ENCODE measurements at regions of chr1 and their contacts with region 1.

Region 1: DNA sequence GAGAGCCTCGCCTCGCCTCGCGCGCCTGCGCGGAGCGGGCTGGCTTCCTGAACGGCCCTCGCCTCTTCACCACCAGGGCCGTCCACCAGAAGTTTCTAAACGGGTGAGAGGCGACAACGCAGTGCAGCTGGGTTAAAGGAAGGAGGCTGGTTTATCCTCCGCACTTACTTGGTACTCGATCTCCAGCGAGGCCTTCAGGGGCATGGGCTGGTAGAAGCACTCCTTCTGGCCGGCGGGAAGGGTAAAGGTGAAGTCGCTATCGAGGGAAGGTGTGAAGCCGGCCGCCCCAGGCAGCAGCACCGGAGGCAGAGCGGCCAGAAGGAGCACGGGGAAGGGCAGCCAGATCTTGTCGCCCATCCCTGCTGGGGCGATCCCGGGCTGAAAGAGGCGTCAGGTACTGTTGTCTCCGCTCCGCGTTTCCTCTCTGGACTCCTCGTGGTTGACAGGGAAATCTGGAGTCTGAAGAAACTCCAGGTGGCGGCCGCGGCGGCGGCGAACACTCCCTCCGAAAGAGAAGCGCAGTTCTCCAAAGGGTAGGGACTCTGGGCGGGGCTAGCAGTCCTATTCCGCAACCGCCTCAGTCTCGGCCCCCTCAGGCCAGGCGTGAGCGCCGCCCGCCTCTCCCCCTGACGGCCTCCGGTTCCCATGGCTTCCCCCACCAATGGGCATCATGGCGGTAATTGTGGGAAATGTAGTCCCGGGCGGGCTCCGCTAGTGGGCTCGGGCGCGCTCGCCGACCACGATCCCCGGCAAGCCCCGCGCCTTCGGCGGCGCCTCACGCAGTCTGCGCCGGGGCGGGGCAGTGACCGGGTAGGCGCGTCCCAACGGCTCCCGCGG is at the start of gene TMED5:
- DNase-seq: peak; percentile 98
- ATAC-seq: peak; percentile 85
- H3K4me3 Mint-ChIP-seq: peak within 1 kb of the TSS; percentile 89
- H3K27ac Mint-ChIP-seq: peak within 1 kb of the TSS; percentile 99
- H3K4me1 Mint-ChIP-seq: peaks cover 41% of the 10 kb centered on the region
- H3K27me3 Mint-ChIP-seq: no peaks in the 10 kb centered on the region
- total RNA-seq, gene TMED5: 32.6 to 33.0 TPM

Region 2: GRCh38 chr1:92843429-92844352 is 336.4 kb before region 1 on chr1:
- CTCF ChIA-PET with region 1: no interaction called
- POLR2A ChIA-PET with region 1: interaction called, 10 read pairs
- intact Hi-C with region 1: no loop called
- DNase-seq: no peak
- ATAC-seq: no peak
- H3K4me3 Mint-ChIP-seq: no peak overlapping the region
- H3K27ac Mint-ChIP-seq: peak overlapping the region; percentile 37
- H3K4me1 Mint-ChIP-seq: peaks cover 16% of the 10 kb centered on the region
- H3K27me3 Mint-ChIP-seq: no peaks in the 10 kb centered on the region

Region 3: GRCh38 chr1:93042187-93043056 is 137.7 kb before region 1 on chr1:
- CTCF ChIA-PET with region 1: no interaction called
- POLR2A ChIA-PET with region 1: no interaction called
- intact Hi-C with region 1: loop called in 1 of 2 experiments (anchors 1 kb)
- DNase-seq: peak; percentile 20
- ATAC-seq: peak; percentile 98
- H3K4me3 Mint-ChIP-seq: peak overlapping the region; percentile 56
- H3K27ac Mint-ChIP-seq: peak overlapping the region; percentile 92
- H3K4me1 Mint-ChIP-seq: peaks cover 30% of the 10 kb centered on the region
- H3K27me3 Mint-ChIP-seq: no peaks in the 10 kb centered on the region

Region 4: DNA sequence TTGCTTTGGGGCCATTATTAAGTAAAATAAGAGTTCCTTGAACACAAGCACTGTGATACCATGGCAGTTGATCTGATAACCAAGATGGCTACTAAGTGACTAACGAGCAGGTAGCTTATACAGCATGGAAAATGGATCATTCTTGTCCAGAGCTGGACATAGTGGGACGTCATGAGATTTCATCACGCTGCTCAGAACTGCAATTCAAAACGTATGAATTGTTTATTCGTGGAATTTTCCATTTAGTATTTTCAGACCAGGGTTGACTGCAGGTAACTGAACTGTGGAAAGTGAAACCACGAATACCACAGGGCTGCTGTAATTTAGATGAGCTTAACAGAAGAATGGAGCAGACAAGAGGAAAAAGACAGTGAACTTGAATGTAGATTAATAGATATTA is 39.3 kb after region 1 on chr1:
- CTCF ChIA-PET with region 1: no interaction called
- POLR2A ChIA-PET with region 1: no interaction called
- intact Hi-C with region 1: loop called in 1 of 2 experiments (anchors 2 kb)
- DNase-seq: peak; percentile 50
- ATAC-seq: peak; percentile 64
- H3K4me3 Mint-ChIP-seq: peak overlapping the region; percentile 44
- H3K27ac Mint-ChIP-seq: peak overlapping the region; percentile 86
- H3K4me1 Mint-ChIP-seq: peaks cover 18% of the 10 kb centered on the region
- H3K27me3 Mint-ChIP-seq: no peaks in the 10 kb centered on the region

Region 5: DNA sequence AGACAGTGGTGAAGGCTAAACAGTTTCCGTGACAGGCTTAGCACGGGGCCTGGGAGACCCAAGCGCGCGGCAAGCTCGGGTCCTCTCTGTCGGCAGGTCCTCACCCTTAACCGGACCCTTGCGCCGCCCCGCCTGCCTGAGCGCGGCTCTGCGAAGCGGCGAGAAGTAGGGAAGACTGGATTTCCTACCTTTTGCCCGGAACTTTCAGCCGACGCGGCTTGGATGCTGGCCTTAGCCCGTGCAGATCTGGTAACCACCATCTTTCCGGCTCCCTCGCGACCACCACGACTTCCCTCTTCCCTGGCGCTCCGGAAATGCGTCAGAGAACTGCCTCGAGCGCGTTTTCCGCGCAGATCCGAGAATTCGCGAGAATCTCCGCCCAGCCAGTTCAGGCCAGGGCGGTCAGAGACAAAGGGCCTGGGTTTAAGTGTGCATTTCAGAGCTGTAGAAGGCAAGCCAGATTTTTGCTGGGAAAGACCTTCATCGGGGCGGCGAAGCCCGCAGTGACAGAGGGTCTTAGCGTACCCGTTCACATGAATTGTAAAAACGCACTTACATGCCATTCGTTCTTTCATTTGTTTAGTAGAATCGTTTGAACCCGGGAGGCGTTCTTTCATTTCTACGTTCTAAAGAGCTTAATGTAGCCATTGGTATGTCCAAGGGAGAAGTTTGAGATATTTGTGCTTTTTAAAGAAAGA is 698.9 kb after region 1 on chr1 and contains the start of gene DNTTIP2:
- CTCF ChIA-PET with region 1: no interaction called
- POLR2A ChIA-PET with region 1: no interaction called
- intact Hi-C with region 1: loop called in 1 of 2 experiments (anchors 1 kb)
- DNase-seq: peak; percentile 94
- ATAC-seq: peak; percentile 93
- H3K4me3 Mint-ChIP-seq: peak within 1 kb of the TSS; percentile 92
- H3K27ac Mint-ChIP-seq: peak within 1 kb of the TSS; percentile 97
- H3K4me1 Mint-ChIP-seq: peaks cover 45% of the 10 kb centered on the region
- H3K27me3 Mint-ChIP-seq: no peaks in the 10 kb centered on the region
- total RNA-seq, gene DNTTIP2: 82.8 to 84.9 TPM

Region 6: GRCh38 chr1:94417978-94418663 is 1238.0 kb after region 1 on chr1 and contains the start of gene ABCD3:
- CTCF ChIA-PET with region 1: no interaction called
- POLR2A ChIA-PET with region 1: no interaction called
- intact Hi-C with region 1: loop called in 1 of 2 experiments (anchors 10 kb)
- DNase-seq: peak; percentile 98
- ATAC-seq: peak; percentile 91
- H3K4me3 Mint-ChIP-seq: no peak within 1 kb of the TSS
- H3K27ac Mint-ChIP-seq: peak within 1 kb of the TSS; percentile 87
- H3K4me1 Mint-ChIP-seq: peaks cover 29% of the 10 kb centered on the region
- H3K27me3 Mint-ChIP-seq: peaks cover 6% of the 10 kb centered on the region
- total RNA-seq, gene ABCD3: 46.1 to 67.1 TPM

Measured in activated CD4-positive, alpha-beta T cell treated with anti-CD3 and anti-CD28 coated beads for 36 hours (primary cell).